Motor neuron (in vitro differentiated cells): ENCODE measurements at regions of chrX and their contacts with region 1.

Region 1: GRCh38 chrX:15854712-15855567 is at the start of gene AP1S2:
- ATAC-seq: peak; percentile 88 to 94 (median 93)
- H3K4me3 ChIP-seq: peak within 1 kb of the TSS; percentile 61 to 81 (median 68)
- H3K27ac ChIP-seq: peak within 1 kb of the TSS; percentile 87 to 88
- H3K4me1 ChIP-seq: peaks cover 3 to 27% of the 10 kb centered on the region in 2 donors
- total RNA-seq, gene AP1S2: 50.0 to 137 (median 77.4) TPM

Region 2: DNA sequence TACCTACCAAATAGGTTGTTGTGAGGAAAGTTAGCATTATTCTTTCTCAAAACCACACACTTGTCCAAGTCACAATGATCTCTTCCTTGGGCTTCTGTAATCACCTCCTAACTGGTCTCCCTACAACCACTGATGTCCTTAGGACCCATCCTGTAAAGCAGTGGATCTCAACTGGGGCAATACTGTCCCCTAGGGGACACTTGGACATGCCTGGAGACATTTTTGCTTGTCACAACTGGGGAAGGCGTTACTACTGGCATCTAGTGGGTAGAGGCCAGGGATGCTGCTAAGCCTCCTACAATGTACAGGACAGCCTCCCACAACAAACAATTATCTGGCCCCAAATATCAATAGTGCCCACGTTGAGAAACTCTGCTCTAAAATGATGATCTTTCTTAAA is 118.4 kb after region 1 on chrX:
- in situ Hi-C with region 1: loop called in 1 of 9 experiments (anchors 10 kb)
- ATAC-seq: peak in 3 of 8 experiments; percentile 71 to 77 (median 71)
- H3K4me3 ChIP-seq: no peak overlapping the region
- H3K27ac ChIP-seq: no peak overlapping the region
- H3K4me1 ChIP-seq: no peaks in the 10 kb centered on the region

Region 3: DNA sequence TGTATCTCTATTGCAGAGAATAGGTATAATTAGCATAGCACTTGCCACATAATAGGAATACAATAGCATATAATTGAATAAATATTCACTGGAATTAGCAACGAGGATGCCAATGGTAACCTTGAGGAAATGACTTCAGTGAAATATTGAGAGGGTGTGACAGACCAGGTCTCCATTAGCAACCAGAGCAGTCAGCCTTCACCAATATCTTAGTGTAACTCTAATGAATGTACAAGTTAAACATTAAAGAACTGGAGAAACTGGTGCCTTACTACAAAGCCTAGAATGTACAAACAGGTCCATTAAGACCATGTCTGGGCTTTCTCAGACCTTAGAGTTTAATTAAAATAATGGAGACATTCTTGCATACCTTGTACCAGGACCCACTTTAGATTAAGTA is 455.4 kb after region 1 on chrX:
- in situ Hi-C with region 1: no loop called
- ATAC-seq: no peak
- H3K4me3 ChIP-seq: no peak overlapping the region
- H3K27ac ChIP-seq: no peak overlapping the region
- H3K4me1 ChIP-seq: no peaks in the 10 kb centered on the region